Calu3 (cell line): ENCODE measurements at regions of chr2 and their contacts with region 1.

Region 1: GRCh38 chr2:49080681-49081080 is 73.6 kb downstream of the FSHR start:
- DNase-seq: no peak
- H3K4me3 Mint-ChIP-seq: no peak overlapping the region
- H3K27ac Mint-ChIP-seq: no peak overlapping the region
- H3K4me1 Mint-ChIP-seq: no peaks in the 10 kb centered on the region
- H3K27me3 Mint-ChIP-seq: no peaks in the 10 kb centered on the region
- CTCF ChIP-seq: no peak

Region 2: GRCh38 chr2:49028101-49028500 is 52.6 kb before region 1 on chr2:
- CTCF ChIA-PET with region 1: no interaction called
- intact Hi-C with region 1: no loop called
- DNase-seq: no peak
- H3K4me3 Mint-ChIP-seq: no peak overlapping the region
- H3K27ac Mint-ChIP-seq: no peak overlapping the region
- H3K4me1 Mint-ChIP-seq: no peaks in the 10 kb centered on the region
- H3K27me3 Mint-ChIP-seq: no peaks in the 10 kb centered on the region
- CTCF ChIP-seq: no peak

Region 3: DNA sequence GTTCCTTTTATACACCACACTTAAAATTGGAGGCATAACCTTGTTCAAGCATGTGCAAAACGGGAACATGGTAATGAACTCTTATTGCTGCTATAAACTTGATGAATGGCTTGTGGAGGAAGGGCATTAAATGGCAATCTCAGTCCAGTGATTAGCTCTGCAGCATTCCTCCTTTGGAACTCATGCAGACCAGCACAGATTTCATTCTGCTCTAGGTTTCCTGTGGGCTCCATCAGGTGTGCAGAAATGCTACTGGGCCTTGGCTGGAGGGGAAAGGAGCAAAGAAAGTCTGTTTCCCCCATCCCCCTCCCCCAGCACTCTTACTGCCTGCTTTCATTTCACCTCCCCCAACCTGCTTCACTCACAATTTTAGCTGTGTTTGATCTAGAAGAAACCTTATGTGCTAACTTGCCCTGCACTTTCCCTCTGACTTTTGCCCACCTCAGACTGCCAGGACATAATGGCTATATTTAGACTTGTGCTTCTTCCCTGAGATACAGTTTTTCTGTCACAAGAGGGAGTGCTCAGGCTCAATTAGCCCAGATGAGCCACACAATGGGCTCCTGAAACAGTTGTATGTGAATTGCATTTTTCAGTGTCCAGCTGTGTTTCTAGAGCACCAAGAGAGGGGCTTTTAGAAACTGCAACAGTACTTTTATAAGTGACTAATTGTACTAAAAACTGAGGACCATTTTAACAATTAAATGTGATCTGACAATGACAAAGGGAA is 36.2 kb before region 1 on chr2:
- CTCF ChIA-PET with region 1: interaction called, 11 read pairs
- intact Hi-C with region 1: no loop called
- DNase-seq: no peak
- H3K4me3 Mint-ChIP-seq: no peak overlapping the region
- H3K27ac Mint-ChIP-seq: no peak overlapping the region
- H3K4me1 Mint-ChIP-seq: no peaks in the 10 kb centered on the region
- H3K27me3 Mint-ChIP-seq: no peaks in the 10 kb centered on the region
- CTCF ChIP-seq: no peak

Region 4: GRCh38 chr2:49236316-49236715 is 155.6 kb after region 1 on chr2:
- CTCF ChIA-PET with region 1: no interaction called
- intact Hi-C with region 1: no loop called
- DNase-seq: no peak
- H3K4me3 Mint-ChIP-seq: no peak overlapping the region
- H3K27ac Mint-ChIP-seq: no peak overlapping the region
- H3K4me1 Mint-ChIP-seq: no peaks in the 10 kb centered on the region
- H3K27me3 Mint-ChIP-seq: no peaks in the 10 kb centered on the region
- CTCF ChIP-seq: no peak